OCI-LY7 (cell line): ENCODE measurements at regions of chr7 and their contacts with region 1.

Region 1: GRCh38 chr7:55255496-55256435 is 109.4 kb upstream of the LANCL2 start:
- DNase-seq: peak; percentile 77
- H3K4me3 ChIP-seq: peak overlapping the region; percentile 64
- H3K27ac ChIP-seq: no peak overlapping the region
- H3K4me1 ChIP-seq: peaks cover 5% of the 10 kb centered on the region
- CTCF ChIP-seq: peak; percentile 81

Region 2: GRCh38 chr7:55086413-55087201 is 169.2 kb before region 1 on chr7:
- CTCF ChIA-PET with region 1: no interaction called
- POLR2A ChIA-PET with region 1: no interaction called
- intact Hi-C with region 1: loop called (anchors 10 kb)
- DNase-seq: peak; percentile 39
- H3K4me3 ChIP-seq: no peak overlapping the region
- H3K27ac ChIP-seq: no peak overlapping the region
- H3K4me1 ChIP-seq: peaks cover 22% of the 10 kb centered on the region
- CTCF ChIP-seq: no peak

Region 3: DNA sequence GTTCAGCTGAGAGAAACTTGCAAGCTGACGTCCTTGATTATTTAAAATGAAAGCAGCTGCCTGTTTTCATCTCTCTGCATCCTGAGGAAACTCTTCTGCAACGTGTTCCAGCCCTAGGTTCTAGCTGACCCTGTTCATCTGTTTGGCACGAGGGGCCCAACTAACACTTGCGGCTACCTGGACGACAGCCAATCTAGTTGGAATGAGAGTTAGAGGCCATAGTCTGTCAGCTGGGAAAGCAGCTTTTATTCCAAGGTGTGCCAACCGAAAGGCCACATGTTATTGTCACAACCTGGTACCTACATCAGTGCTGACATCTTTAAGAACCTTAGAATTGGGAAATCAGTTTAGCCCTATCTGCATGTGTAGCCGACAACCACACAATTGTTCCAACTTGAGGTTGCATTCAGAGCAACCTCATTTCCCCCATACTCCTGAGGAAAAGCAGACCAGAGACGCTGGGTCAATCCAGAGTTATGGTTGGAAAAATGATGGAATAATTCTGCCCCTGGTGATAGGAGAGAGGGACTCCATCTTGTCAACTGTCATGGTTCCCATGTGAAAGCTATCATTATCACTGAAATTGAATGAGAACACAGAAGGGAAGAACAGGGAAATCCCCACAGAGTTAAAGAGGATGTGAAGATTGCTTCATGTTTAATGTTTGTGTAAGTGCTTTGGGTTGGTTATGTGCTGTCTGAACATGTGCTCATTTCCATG is 115.4 kb before region 1 on chr7:
- CTCF ChIA-PET with region 1: no interaction called
- POLR2A ChIA-PET with region 1: no interaction called
- intact Hi-C with region 1: loop called (anchors 5 kb)
- DNase-seq: no peak
- H3K4me3 ChIP-seq: no peak overlapping the region
- H3K27ac ChIP-seq: no peak overlapping the region
- H3K4me1 ChIP-seq: no peaks in the 10 kb centered on the region
- CTCF ChIP-seq: no peak

Region 4: DNA sequence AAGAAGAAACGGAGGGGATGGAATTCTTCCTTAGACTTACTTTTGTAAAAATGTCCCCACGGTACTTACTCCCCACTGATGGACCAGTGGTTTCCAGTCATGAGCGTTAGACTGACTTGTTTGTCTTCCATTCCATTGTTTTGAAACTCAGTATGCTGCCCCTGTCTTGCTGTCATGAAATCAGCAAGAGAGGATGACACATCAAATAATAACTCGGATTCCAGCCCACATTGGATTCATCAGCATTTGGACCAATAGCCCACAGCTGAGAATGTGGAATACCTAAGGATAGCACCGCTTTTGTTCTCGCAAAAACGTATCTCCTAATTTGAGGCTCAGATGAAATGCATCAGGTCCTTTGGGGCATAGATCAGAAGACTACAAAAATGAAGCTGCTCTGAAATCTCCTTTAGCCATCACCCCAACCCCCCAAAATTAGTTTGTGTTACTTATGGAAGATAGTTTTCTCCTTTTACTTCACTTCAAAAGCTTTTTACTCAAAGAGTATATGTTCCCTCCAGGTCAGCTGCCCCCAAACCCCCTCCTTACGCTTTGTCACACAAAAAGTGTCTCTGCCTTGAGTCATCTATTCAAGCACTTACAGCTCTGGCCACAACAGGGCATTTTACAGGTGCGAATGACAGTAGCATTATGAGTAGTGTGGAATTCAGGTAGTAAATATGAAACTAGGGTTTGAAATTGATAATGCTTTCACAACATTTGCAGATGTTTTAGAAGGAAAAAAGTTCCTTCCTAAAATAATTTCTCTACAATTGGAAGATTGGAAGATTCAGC is 49.3 kb before region 1 on chr7:
- CTCF ChIA-PET with region 1: no interaction called
- POLR2A ChIA-PET with region 1: no interaction called
- intact Hi-C with region 1: no loop called
- DNase-seq: no peak
- H3K4me3 ChIP-seq: no peak overlapping the region
- H3K27ac ChIP-seq: no peak overlapping the region
- H3K4me1 ChIP-seq: no peaks in the 10 kb centered on the region
- CTCF ChIP-seq: no peak